ENCODE measurements at regions of chr14 and their contacts with region 1.

Region 1: GRCh38 chr14:93195316-93195999 is 10.3 kb downstream of the LYSET start:
- DNase-seq: no peak
- H3K4me3 ChIP-seq: no peak overlapping the region
- CTCF ChIP-seq: no peak

Region 2: GRCh38 chr14:93184388-93185353 is 10.8 kb before region 1 on chr14 and contains the starts of genes LYSET and MOAP1:
- CTCF ChIA-PET with region 1: interaction called, 11 read pairs
- POLR2A ChIA-PET with region 1: interaction called, 3 read pairs
- DNase-seq: no peak
- H3K4me3 ChIP-seq: peak within 1 kb of the TSS; percentile 96
- CTCF ChIP-seq: peak; percentile 6

Region 3: DNA sequence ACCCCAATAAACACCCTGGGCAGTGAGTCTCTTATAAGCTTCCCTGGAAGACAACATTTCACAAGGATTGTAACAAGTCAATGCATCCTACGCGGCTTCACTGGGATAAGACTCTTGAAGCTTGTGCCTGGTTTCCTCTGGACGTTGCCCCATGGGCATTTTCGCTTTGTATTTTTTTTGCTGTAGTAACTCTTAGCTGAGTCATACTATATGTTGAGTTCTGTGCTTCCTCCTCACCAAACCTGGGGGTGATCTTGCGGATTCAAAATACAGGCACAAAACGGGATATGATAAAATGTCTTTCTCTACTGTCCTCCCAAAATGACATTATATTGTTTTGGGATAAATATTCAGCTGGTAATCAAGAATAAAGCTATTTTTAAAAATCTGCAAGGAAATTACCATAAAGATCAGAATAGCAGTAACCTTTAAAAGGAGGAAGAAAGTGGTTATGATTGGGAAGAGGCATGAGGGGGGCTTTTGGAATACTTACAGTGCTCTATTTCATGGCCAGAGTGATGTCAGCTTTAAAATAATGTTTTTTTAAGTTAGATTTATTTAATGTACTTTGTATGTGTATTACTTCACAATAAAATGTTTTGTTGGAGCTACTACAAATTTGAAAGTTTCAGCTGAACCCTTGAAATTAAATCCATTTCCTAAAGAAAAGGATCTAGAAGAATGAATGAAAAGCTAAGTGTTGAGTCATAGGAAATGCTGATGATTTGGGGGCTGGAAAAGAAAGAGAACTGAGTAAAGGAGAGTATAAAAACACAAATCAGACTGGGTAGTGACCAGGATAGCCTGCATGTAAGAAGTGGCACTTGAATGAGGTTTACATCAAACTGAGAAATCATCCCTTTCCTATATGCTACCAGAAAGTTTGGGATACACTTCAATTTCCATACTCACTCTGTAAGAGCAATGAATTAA is 122.7 kb after region 1 on chr14:
- CTCF ChIA-PET with region 1: no interaction called
- POLR2A ChIA-PET with region 1: no interaction called
- DNase-seq: no peak
- H3K4me3 ChIP-seq: no peak overlapping the region
- CTCF ChIP-seq: no peak

Region 4: GRCh38 chr14:93331002-93331727 is 135.7 kb after region 1 on chr14:
- CTCF ChIA-PET with region 1: no interaction called
- POLR2A ChIA-PET with region 1: no interaction called
- DNase-seq: no peak
- H3K4me3 ChIP-seq: peak overlapping the region; percentile 70
- CTCF ChIP-seq: no peak